ENCODE measurements at regions of chr15 and their contacts with region 1.

Region 1: DNA sequence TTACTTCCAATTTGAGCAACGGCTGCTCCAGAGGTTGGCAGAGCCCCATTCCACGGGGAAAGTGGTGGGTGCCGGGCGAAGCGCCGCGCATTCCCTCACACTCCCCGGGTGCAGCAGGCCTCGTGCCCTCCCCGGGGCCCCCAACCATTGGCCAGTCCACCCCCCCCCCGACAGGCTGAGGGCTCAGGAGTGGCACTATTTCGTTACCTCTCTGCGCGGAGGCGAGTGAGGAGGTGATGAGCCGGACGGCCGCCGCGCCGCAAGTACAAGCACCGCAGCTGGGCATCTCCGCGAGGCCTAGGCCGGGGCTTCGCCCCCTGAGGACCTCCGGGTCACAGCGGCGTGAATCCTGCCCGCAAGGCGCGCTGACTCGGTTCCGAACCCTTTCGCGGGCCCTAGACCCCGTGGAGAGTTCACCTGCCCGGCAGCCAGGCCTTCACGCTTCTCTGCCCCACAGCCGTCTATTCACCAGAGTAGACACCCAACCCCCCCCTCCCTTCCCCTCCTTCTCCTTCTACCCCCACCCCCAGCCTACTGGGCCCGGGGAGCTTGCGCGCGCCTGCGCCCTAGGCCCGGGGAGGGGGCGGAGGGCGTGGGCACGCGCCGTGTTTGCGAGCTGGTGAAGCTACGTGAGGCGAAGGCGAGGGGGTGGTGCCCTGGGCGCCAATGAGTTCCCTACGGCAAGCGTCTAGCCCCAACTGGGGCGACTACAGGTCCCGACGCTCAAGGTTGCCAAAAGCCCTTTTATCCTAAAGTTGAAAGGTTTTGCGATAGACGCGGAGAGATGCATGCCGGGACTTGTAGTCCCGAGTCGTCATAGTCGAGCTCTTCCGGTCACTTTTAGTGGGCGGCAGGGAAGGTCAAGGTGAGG is at the start of gene CLPX:
- DNase-seq: peak in 1 of 2 donors; percentile 95
- H3K4me3 ChIP-seq: peak within 1 kb of the TSS; percentile 83 to 96
- H3K27ac ChIP-seq: peak within 1 kb of the TSS; percentile 92
- H3K4me1 ChIP-seq: peaks cover 40% of the 10 kb centered on the region
- H3K27me3 ChIP-seq: no peaks in the 10 kb centered on the region
- CTCF ChIP-seq: no peak
- POLR2A ChIP-seq: peak in 1 of 2 donors; percentile 64
- total RNA-seq, gene CLPX: 46.4 TPM

Region 2: DNA sequence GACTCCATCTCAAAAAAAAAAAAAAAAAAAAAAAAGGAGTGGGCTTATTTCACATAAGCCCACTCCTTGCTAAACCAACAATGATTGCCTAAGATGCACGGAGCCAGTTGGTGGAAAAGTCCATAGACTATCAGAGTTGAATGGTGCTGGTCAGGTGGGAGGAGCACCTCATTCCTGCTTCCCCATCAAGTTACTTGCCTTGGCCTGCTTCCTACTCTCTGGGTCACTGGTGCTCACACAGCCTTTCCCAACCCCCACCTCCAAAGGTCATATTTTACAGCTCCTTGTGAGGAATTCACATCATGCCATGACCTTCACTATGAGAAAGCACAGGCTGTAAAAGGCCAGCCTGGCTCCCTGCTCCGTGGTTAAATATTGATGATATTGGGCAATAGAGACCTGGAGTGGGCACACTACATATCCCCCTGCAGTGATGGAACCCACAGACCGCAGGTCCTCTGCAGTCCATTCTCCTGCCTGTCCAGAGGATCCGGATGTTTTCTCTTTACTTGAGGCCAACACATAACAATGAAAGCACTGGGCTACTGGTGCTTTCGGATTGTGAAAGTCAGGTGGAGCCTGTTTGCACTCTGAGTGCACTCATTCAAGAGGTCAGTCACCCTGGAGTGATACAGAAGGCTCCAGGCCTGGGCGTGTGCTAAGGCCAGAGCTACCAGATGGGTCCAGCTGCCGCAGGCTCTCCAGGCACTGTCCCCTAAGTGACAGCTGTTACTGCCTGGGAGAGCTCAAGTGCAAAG is 140.2 kb before region 1 on chr15 and contains the start of gene SLC51B:
- intact Hi-C with region 1: no loop called
- DNase-seq: no peak
- H3K4me3 ChIP-seq: no peak within 1 kb of the TSS
- H3K27ac ChIP-seq: no peak within 1 kb of the TSS
- H3K4me1 ChIP-seq: peaks cover 41% of the 10 kb centered on the region
- H3K27me3 ChIP-seq: no peaks in the 10 kb centered on the region
- CTCF ChIP-seq: no peak
- POLR2A ChIP-seq: no peak
- total RNA-seq, gene SLC51B: not detected

Region 3: DNA sequence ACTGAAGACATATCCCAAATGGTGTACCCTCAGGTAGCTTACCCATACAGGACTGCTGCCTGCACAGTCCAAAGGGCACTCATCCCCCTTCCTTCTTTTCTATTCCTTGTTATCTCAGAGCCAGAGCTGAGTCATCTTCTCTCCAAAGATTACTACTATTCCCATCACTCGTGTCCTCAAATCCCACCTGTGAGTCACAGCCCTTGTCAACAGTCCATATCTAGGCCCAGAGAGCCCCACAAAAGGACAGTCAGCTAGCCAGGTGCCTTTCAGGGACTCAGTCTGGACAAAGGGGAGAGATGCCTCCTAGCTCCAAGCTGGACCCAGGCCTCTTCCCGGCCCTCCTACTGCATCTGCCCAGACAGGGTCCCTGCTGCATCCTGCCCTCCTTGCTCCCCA is 90.6 kb after region 1 on chr15:
- intact Hi-C with region 1: loop called (anchors 5 kb)
- DNase-seq: no peak
- H3K4me3 ChIP-seq: no peak overlapping the region
- H3K27ac ChIP-seq: no peak overlapping the region
- H3K4me1 ChIP-seq: no peaks in the 10 kb centered on the region
- H3K27me3 ChIP-seq: no peaks in the 10 kb centered on the region
- CTCF ChIP-seq: no peak
- POLR2A ChIP-seq: no peak

Region 4: DNA sequence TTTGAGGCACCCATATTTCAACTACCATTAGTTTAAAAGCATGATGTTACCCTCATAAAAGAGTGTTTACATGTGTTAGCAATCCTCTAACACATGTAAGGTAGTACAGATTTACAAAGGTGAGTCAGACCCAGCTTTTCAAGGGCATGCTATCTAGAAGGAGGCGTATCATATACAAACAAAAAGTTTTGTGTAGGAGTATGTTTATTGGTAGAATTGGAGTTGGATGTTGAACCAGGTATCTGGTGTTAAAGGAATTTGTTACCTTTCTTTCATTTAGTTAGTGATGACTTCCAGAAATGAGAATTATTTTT is 347.6 kb after region 1 on chr15:
- intact Hi-C with region 1: no loop called
- DNase-seq: no peak
- H3K4me3 ChIP-seq: no peak overlapping the region
- H3K27ac ChIP-seq: peak overlapping the region; percentile 54
- H3K4me1 ChIP-seq: peaks cover 42% of the 10 kb centered on the region
- H3K27me3 ChIP-seq: no peaks in the 10 kb centered on the region
- CTCF ChIP-seq: no peak
- POLR2A ChIP-seq: no peak

Measured in vagina (tissue), 2 donors.